GM10248 (cell line): ENCODE measurements at regions of chr2 and their contacts with region 1.

Region 1: GRCh38 chr2:225002039-225002655 is 40.1 kb downstream of the DOCK10 start:
- DNase-seq: peak; percentile 57
- CTCF ChIP-seq: peak; percentile 79

Region 2: DNA sequence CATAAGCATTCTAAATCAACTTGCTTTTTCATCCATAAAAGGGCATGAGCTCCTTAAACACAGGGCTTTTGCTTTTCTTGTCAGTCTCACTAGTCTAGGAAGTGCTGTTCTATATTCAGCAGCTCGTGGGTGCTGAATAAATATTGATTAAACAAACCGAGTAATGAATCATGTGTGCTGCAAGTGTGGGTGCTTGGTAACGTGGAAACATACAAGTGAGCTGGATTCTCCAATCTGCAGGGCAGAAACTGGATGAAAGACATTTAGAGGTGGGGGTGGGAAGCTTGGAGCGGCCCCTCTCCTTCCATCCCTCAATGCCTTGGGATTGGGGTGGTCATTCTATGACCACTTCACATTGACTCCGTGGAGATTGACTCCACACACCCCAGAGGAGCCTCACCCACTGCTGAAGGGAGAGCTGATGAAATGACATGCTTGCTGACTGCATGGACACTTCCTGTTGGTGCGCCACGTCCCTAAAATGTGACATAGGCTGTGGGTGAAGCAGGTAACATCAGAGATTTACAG is 74.4 kb before region 1 on chr2:
- CTCF ChIA-PET with region 1: interaction called, 59 read pairs
- POLR2A ChIA-PET with region 1: no interaction called
- DNase-seq: no peak
- CTCF ChIP-seq: no peak

Region 3: GRCh38 chr2:224946895-224947294 is 55.3 kb before region 1 on chr2:
- CTCF ChIA-PET with region 1: interaction called, 18 read pairs
- POLR2A ChIA-PET with region 1: no interaction called
- DNase-seq: no peak
- CTCF ChIP-seq: no peak

Region 4: DNA sequence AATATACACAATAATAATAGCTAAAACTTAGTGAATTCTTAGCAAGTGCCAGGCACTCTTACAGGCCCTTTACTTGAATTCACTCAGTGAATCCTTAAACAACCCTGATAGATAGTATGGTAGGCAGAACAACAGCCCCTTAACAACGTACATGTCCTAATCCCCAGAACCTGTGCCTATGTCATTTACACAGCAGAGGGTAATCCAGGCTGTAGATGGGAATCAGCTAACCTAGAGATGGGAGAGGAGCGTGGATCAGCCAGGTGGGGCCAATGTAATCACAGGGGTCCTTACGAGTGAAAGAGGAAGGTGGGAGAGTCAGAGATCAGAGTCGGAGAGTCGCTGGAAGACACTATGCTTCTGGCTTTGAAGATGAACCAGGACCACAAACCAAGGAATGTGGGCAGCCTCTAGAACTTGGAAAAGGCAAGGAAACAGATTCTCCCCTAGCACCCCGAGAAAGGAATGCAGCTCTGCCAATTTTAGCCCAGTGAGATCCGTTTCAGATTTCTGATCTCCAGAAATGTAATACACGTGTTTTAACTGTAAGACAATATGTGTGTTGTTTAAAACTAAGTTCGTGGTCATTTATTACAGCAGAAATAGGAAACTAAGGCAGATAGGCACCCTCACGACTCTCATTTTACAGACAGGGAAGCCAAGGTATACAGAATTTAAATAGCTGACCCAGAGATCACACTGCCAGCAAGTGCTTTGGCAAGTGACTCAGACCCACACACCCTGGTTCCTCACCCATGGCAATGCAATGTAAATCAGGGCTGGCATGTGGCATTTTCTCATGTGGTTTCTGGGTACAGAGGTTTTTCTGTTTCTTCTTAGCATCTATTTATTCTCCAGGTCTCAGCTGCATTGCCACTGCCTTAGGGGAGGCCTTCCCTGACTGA is 28.8 kb before region 1 on chr2:
- CTCF ChIA-PET with region 1: interaction called, 17 read pairs
- POLR2A ChIA-PET with region 1: no interaction called
- DNase-seq: no peak
- CTCF ChIP-seq: no peak

Region 5: GRCh38 chr2:225020168-225020849 is 18.2 kb after region 1 on chr2:
- CTCF ChIA-PET with region 1: interaction called, 19 read pairs
- POLR2A ChIA-PET with region 1: interaction called, 8 read pairs
- DNase-seq: no peak
- CTCF ChIP-seq: no peak

Region 6: GRCh38 chr2:225660262-225661131 is 658.4 kb after region 1 on chr2:
- CTCF ChIA-PET with region 1: interaction called, 20 read pairs
- POLR2A ChIA-PET with region 1: no interaction called
- DNase-seq: peak; percentile 61
- CTCF ChIP-seq: peak; percentile 87